Psoas muscle (tissue), 8 donors: ENCODE measurements at regions of chr3 and their contacts with region 1.

Region 1: GRCh38 chr3:129224984-129225393 is 24.4 kb upstream of the COPG1 start:
- DNase-seq: peak; percentile 89 to 96
- ATAC-seq: peak; percentile 90 to 95 (median 90)
- H3K4me3 ChIP-seq: peak overlapping the region; percentile 33
- H3K27ac ChIP-seq: peak overlapping the region; percentile 97
- H3K4me1 ChIP-seq: peaks cover 39% of the 10 kb centered on the region
- H3K27me3 ChIP-seq: no peaks in the 10 kb centered on the region
- CTCF ChIP-seq: no peak

Region 2: DNA sequence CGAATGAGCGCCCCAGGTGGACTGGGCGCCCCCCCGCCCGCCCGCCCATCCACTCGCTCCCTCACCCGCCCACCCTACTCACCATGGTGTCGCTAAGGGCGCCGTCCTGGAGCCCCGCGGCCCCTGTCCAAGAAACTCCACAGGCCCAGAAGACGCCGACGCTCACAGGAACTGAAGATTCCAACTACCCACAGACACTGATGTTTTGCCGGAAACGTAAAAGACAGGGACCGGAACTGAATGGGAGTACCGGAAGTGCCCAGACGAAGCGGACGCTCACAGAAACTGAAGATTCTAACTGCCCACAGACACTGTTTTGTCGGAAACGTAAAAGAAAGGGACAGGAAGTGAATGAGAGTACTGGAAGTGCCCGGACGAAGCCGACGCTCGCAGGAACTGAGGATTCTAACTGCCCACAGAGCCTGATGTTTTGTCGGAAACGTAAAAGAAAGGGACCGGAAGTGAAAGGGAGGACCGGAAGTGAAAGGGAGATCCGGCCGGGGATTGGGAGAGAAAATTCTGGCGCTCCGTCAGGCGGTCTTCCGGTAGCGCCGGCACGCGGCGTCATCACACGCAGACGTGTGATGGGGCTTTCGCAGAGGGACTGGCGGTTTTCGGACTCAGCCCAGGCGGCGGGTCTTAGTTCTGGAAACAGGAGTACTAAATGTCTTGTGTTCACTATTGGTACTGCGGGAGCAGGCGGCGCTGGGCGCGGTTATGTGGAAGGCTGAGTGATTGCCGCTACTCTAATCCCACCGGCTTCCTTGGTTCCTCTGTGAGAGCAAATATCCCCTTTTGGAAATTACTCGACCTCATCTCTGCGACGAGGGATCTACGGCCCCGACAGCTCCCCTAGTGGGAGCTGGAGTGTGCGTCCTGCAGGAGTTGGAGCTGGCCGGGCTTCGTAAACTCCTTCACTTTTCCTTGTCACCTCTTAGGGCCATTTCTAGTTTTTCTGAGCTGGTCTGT is 63.8 kb before region 1 on chr3 and contains the start of gene ISY1:
- intact Hi-C with region 1: loop called in 1 of 2 experiments (anchors 1 kb)
- DNase-seq: peak; percentile 89 to 94
- ATAC-seq: peak; percentile 84 to 87 (median 86)
- H3K4me3 ChIP-seq: peak within 1 kb of the TSS; percentile 96
- H3K27ac ChIP-seq: peak within 1 kb of the TSS; percentile 100
- H3K4me1 ChIP-seq: peaks cover 29% of the 10 kb centered on the region
- H3K27me3 ChIP-seq: no peaks in the 10 kb centered on the region
- CTCF ChIP-seq: peak; percentile 82
- total RNA-seq, gene ISY1: 25.9 to 39.3 (median 31.7) TPM

Region 3: GRCh38 chr3:129173725-129174124 is 51.3 kb before region 1 on chr3:
- intact Hi-C with region 1: loop called in 1 of 2 experiments (anchors 2 kb)
- DNase-seq: no peak
- ATAC-seq: no peak
- H3K4me3 ChIP-seq: peak overlapping the region; percentile 58
- H3K27ac ChIP-seq: peak overlapping the region; percentile 100
- H3K4me1 ChIP-seq: peaks cover 68% of the 10 kb centered on the region
- H3K27me3 ChIP-seq: no peaks in the 10 kb centered on the region
- CTCF ChIP-seq: no peak

Region 4: GRCh38 chr3:129183569-129184395 is 41.2 kb before region 1 on chr3 and contains the start of gene CNBP:
- intact Hi-C with region 1: loop called (anchors 1 to 5 kb)
- DNase-seq: peak; percentile 96 to 97
- ATAC-seq: peak; percentile 84 to 95 (median 90)
- H3K4me3 ChIP-seq: peak within 1 kb of the TSS; percentile 97
- H3K27ac ChIP-seq: peak within 1 kb of the TSS; percentile 100
- H3K4me1 ChIP-seq: peaks cover 49% of the 10 kb centered on the region
- H3K27me3 ChIP-seq: no peaks in the 10 kb centered on the region
- CTCF ChIP-seq: no peak
- total RNA-seq, gene CNBP: 754 to 850 (median 816) TPM

Region 5: GRCh38 chr3:129195731-129196256 is 29.2 kb before region 1 on chr3:
- intact Hi-C with region 1: loop called in 1 of 2 experiments (anchors 2 kb)
- DNase-seq: peak; percentile 46 to 76
- ATAC-seq: peak; percentile 94 to 95 (median 95)
- H3K4me3 ChIP-seq: peak overlapping the region; percentile 28
- H3K27ac ChIP-seq: peak overlapping the region; percentile 88
- H3K4me1 ChIP-seq: peaks cover 56% of the 10 kb centered on the region
- H3K27me3 ChIP-seq: no peaks in the 10 kb centered on the region
- CTCF ChIP-seq: no peak

Region 6: DNA sequence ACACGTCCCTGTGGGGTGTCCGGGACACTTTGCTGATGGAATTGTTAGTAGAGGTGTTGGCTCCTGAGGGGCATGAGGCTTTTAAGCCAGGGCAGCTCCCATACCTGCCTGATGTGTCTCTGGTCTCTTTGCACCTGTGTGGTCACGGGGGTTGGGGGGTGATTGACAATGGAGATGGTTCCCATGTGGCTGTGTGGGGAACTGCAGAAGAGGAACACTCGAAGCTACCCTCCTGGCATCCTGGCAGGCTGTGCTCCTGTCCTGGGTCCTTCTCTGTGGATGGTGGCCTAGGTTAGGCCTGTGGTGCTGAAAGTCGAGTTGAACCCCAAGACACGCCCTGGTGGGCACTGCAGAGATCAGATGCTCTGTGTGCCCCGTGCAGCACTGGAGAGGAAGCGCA is 127.1 kb after region 1 on chr3:
- intact Hi-C with region 1: no loop called
- DNase-seq: no peak
- ATAC-seq: no peak
- H3K4me3 ChIP-seq: no peak overlapping the region
- H3K27ac ChIP-seq: no peak overlapping the region
- H3K4me1 ChIP-seq: no peaks in the 10 kb centered on the region
- H3K27me3 ChIP-seq: no peaks in the 10 kb centered on the region
- CTCF ChIP-seq: no peak